HCT116 (cell line): ENCODE measurements at regions of chr9 and their contacts with region 1.

Region 1: GRCh38 chr9:89919169-89919681 is 314.4 kb downstream of the GADD45G start:
- DNase-seq: peak; percentile 15
- ATAC-seq: peak; percentile 88
- H3K4me3 ChIP-seq: no peak overlapping the region
- H3K27ac ChIP-seq: no peak overlapping the region
- H3K4me1 ChIP-seq: peaks cover 3 to 4% of the 10 kb centered on the region in 2 experiments; a peak in 2 of 4 replicates
- H3K27me3 ChIP-seq: peaks cover 20% of the 10 kb centered on the region
- CTCF ChIP-seq: peak; percentile 26 to 49 (median 27); a peak in 3 of 6 replicates
- POLR2A ChIP-seq: no peak
- RAD21 ChIP-seq: peak; percentile 48

Region 2: DNA sequence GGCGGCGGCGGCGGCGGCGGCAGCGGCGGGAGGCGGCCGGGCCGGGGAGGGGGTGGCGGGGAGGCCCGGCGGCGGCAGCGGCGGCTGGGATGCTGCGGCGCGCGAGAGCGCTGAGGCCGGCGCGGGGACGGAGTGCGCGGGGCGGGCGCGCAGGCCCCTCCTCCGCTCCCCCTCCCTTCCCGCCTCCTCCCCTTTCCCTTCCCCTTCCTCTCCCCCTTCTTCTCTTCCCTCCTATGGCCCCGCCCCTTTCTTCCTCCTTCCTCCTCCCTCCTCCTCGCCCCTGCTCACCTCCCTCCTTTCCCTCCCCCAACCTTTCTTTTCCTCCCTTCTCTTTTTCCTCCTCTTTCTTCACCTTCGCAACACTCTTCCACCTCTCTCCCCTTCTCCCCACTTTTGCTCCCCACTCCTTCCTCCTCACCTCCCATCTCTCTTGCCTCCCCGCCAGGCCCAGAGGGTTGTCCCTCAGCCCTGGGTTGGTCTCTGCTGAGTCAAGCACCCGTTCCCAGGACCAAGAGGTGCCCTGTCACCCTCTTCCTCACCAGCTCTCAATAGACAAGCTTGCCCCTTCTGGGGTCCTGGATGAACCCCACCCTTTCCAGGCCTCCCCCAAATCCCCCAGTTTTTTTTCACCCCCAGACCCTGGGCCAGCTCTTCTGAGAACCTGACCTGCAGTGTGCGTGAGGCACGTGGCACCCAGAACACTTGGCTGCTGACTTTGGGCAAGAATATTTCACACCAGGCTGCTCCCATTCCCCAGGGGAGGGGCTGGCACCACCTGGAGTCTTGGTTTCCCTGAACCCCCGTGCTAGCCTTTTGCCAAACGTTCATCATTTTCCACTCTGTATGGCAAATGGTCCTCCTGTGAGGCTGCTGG is 421.0 kb before region 1 on chr9 and contains the start of gene SEMA4D:
- CTCF ChIA-PET with region 1: no interaction called
- POLR2A ChIA-PET with region 1: no interaction called
- RAD21 ChIA-PET with region 1: no interaction called
- intact Hi-C with region 1: no loop called
- DNase-seq: peak; percentile 53
- ATAC-seq: peak; percentile 91
- H3K4me3 ChIP-seq: peak within 1 kb of the TSS; percentile 68 to 73
- H3K27ac ChIP-seq: peak within 1 kb of the TSS; percentile 61; the same call in 1 of the 2 replicates
- H3K4me1 ChIP-seq: peaks cover 12 to 15% of the 10 kb centered on the region in 2 experiments
- H3K27me3 ChIP-seq: no peaks in the 10 kb centered on the region; the same call in 1 of the 2 replicates
- CTCF ChIP-seq: no peak
- POLR2A ChIP-seq: no peak
- RAD21 ChIP-seq: no peak
- total RNA-seq, gene SEMA4D: 32.0 TPM

Region 3: GRCh38 chr9:89935801-89936200 is 16.6 kb after region 1 on chr9:
- CTCF ChIA-PET with region 1: no interaction called
- POLR2A ChIA-PET with region 1: no interaction called
- RAD21 ChIA-PET with region 1: no interaction called
- intact Hi-C with region 1: no loop called
- DNase-seq: no peak
- ATAC-seq: no peak
- H3K4me3 ChIP-seq: no peak overlapping the region
- H3K27ac ChIP-seq: no peak overlapping the region
- H3K4me1 ChIP-seq: no peaks in the 10 kb centered on the region
- H3K27me3 ChIP-seq: peaks cover 79% of the 10 kb centered on the region
- CTCF ChIP-seq: no peak
- POLR2A ChIP-seq: no peak
- RAD21 ChIP-seq: no peak

Region 4: GRCh38 chr9:90102292-90102901 is 183.2 kb after region 1 on chr9:
- CTCF ChIA-PET with region 1: no interaction called
- POLR2A ChIA-PET with region 1: no interaction called
- RAD21 ChIA-PET with region 1: no interaction called
- intact Hi-C with region 1: loop called (anchors 1 kb)
- DNase-seq: peak; percentile 90
- ATAC-seq: peak; percentile 99
- H3K4me3 ChIP-seq: no peak overlapping the region
- H3K27ac ChIP-seq: no peak overlapping the region
- H3K4me1 ChIP-seq: peaks cover 6 to 9% of the 10 kb centered on the region in 2 experiments; a peak in 2 of 4 replicates
- H3K27me3 ChIP-seq: 0 out of 2 replicates have a peak, but pooled peaks cover 10% of the 10 kb centered on the region
- CTCF ChIP-seq: peak; percentile 78 to 85 (median 80)
- POLR2A ChIP-seq: no peak
- RAD21 ChIP-seq: peak; percentile 92

Region 5: DNA sequence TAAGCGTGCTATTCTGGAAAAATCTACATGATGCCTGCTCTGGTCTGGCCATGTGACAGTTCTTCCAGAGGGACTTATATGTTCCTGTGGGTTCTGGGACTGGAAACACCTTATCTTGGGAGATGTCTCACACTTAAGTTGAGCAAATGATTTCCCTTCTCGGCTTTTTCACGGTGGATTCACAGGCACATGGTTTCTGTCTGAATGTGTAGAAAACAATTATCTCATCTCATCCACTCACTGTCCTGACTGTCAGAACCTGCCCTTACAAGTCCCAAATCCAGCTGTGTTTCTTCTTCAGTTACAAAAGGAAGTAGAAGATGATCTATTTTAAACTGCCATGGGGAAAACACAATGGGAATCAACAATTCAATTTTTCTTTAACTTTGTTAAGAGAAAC is 1066.4 kb after region 1 on chr9:
- CTCF ChIA-PET with region 1: no interaction called
- POLR2A ChIA-PET with region 1: no interaction called
- RAD21 ChIA-PET with region 1: no interaction called
- intact Hi-C with region 1: no loop called
- DNase-seq: no peak
- ATAC-seq: peak; percentile 43
- H3K4me3 ChIP-seq: no peak overlapping the region
- H3K27ac ChIP-seq: no peak overlapping the region
- H3K4me1 ChIP-seq: peaks cover 0 to 3% of the 10 kb centered on the region in 2 experiments; a peak in 1 of 4 replicates
- H3K27me3 ChIP-seq: no peaks in the 10 kb centered on the region
- CTCF ChIP-seq: no peak
- POLR2A ChIP-seq: no peak
- RAD21 ChIP-seq: no peak